Cardiac septum (tissue), 1 donor: ENCODE measurements at regions of chr1 and their contacts with region 1.

Region 1: DNA sequence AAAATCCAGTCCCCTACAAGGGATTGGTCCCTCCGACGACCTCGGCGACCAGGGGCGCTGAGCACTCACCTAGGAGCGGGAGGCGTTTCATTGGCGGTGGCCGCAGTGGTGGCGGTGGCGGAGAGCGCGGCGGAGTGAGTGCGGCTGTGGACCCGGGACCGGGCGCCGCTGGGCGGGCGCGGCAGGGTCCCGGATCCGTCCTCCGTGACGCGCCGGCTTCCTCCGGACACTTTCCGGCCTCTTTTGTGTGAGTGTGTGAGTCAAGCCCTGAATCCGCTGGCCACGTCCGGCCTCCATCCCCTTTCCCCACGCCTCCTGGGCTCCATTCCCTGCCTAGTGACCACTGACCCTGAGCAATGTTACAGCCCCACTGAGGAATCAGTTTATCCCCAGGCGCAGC is at the start of gene ADGRL4:
- DNase-seq: peak; percentile 81
- total RNA-seq, gene ADGRL4: 23.5 TPM

Region 2: DNA sequence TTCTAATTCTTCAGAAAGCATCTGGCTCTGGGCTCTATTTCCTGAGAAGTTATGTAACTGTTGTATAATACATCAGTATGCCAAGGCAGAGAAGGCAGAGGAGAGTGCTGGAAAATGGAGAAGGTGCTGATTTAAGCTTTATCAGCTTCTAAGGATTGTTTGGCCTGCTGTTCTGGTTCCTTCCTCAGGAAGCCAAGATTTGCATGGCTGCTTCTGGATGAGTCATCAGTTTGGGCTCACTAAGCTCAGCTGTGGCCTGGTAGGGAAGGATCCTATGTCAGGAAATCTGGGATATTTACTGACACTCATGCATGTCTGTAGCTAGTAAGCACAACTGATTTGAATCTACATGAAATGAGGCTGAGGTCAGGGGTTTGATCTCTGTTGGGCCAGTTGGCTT is 73.2 kb after region 1 on chr1:
- intact Hi-C with region 1: loop called (anchors 5 kb)
- DNase-seq: no peak